HEK293T (cell line): ENCODE measurements at regions of chr7 and their contacts with region 1.

Region 1: DNA sequence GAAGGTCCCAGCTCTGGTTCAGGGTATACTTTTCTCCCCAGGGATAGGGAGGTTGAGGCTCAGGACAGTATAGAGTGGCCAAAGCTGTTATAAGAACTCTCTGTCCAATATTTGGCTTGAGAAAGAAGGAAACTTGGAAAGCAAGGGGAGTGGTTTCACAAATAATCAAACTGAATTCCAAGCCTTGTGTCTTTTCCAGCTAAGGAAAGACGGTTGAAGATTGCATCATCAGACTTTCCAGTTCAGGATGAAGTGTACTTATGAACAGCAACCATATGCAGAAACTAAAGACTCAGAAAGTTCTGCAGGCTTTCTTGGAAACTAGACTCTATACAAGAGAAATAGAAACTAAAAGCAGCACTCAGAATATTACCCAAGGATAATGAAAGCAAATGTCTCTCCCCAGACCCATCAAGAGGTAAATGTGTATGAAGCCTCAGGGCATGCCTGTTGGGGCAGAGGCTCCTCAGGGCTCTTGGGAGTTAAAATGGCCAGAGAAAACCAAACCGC is 46.4 kb downstream of the RAMP3 start:
- DNase-seq: no peak

Region 2: GRCh38 chr7:45217358-45217757 is 13.4 kb after region 1 on chr7:
- CTCF ChIA-PET with region 1: interaction called, 11 read pairs
- POLR2A ChIA-PET with region 1: no interaction called
- DNase-seq: peak; percentile 48